AG04449 (cell line): ENCODE measurements at regions of chr17 and their contacts with region 1.

Region 1: DNA sequence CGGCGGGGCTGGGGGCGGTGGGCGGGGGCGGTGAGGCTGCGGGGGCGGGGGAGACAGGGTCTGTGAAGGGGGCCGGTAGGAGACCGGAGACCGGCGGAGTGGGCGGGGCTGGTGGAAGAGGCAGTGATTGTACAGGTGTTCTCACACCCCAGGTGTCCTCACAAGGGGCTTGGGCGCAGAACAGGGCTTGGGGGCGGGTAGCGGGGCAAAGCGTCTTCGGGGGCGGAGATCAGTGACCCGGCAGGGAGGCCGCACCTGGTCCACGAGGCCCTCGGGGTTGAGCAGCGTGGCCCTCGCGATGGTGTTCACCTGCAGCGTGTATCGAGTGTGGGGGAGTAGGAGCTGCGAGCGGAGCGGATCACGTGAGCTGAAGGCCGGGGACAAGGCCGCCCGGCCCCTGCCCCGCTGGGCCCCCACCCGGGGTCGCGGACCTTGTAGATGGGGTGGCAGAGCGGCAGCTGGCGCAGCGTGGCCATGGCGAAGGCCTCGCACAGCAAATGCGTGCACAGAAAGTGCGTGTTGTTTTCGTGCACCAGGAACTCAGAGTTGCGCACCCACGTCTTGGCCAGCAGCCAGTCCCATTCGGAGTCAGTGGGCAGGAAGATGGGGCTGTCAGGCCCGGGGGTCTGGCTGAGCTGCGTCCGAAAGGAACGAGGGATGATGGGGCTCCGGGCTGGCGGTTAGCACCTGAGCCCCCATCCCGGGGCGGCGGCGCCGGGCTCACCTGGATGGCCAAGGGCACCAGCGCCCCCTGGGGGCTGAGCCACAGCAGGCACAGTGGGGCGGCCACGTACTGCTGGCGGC is 8.5 kb downstream of the ALOXE3 start:
- DNase-seq: no peak
- H3K4me3 ChIP-seq: peak overlapping the region; percentile 8; the same call in 1 of the 2 replicates
- CTCF ChIP-seq: peak; percentile 79

Region 2: DNA sequence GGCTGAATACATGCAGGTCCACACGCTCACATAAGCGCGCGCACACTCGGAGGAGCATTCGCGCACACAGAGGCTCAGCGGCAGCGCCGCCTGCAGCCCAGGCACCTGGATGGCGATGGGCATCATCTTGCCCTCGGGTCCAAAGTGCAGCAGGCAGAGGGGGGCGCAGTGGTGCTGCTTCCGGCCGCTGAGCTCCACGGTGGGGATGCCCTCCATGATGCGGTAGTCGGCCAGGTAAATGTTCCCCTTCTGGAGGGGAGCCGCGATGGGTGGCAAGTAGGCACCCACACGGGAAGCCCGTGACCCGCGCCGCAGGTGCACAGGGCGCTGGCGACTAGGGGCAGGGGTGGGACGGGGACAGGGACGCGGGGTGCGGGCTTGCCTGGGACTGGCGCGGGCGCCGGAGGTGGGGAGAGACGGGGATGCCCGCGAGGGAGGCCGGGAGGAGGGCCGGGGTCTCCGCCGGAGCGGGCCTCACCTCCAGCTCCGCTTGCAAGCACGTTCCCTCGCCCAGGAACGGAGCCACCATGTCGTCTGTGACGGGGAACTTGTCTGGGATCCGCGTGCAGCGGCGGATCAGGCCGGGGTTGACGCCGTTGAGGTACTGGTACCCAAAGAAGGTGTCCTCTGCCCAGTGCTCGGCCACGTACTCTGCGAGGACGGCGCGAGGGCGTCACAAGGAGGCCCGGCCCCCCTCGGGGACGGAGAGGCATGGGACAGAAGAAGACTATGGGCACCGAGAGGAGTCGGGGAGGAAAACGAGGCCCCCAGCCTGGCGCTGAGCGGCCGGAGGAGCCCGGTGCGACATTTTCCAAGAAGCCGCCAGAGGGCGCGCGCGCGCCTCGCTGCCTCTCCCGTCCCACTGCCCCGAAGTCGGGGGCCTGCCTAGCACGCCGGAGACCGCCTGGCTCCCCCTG is 30.3 kb before region 1 on chr17:
- CTCF ChIA-PET with region 1: interaction called, 216 read pairs
- POLR2A ChIA-PET with region 1: no interaction called
- DNase-seq: no peak
- H3K4me3 ChIP-seq: peak overlapping the region; percentile 55
- CTCF ChIP-seq: peak; percentile 88